Sigmoid colon (tissue), 7 donors: ENCODE measurements at regions of chr3 and their contacts with region 1.

Region 1: DNA sequence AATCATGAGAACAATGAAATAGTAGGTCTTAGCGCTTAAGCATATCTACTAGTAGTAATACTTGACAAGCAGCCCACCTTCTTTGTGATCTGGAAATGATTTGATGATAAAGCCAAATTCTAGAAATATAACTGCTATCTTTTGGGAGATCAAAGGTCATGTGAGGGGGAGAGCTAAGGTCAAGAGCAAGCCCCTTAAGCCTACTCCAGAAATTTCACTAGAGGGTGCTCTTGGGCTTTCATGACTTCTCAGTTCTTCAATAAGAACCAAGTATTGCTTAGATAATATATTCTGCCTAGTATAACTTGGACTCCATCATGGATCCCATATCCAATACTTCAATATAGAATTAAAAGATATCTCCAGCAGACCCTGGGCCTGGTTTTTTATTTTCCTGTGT is 319.6 kb downstream of the ZBTB20 start:
- DNase-seq: no peak
- H3K4me3 ChIP-seq: no peak overlapping the region
- H3K27ac ChIP-seq: no peak overlapping the region
- H3K4me1 ChIP-seq: peaks cover 0 to 4% (median 0%) of the 10 kb centered on the region in 4 donors
- H3K27me3 ChIP-seq: no peaks in the 10 kb centered on the region
- CTCF ChIP-seq: peak in 3 of 4 experiments; percentile 19 to 56 (median 32)
- EP300 ChIP-seq: no peak
- POLR2A ChIP-seq: no peak

Region 2: GRCh38 chr3:114928989-114929640 is 101.6 kb after region 1 on chr3:
- intact Hi-C with region 1: no loop called
- DNase-seq: no peak
- H3K4me3 ChIP-seq: no peak overlapping the region
- H3K27ac ChIP-seq: no peak overlapping the region
- H3K4me1 ChIP-seq: no peaks in the 10 kb centered on the region
- H3K27me3 ChIP-seq: no peaks in the 10 kb centered on the region
- CTCF ChIP-seq: no peak
- EP300 ChIP-seq: no peak
- POLR2A ChIP-seq: no peak

Region 3: GRCh38 chr3:115169808-115170207 is 342.3 kb after region 1 on chr3:
- intact Hi-C with region 1: loop called (anchors 10 kb)
- DNase-seq: no peak
- H3K4me3 ChIP-seq: no peak overlapping the region
- H3K27ac ChIP-seq: no peak overlapping the region
- H3K4me1 ChIP-seq: no peaks in the 10 kb centered on the region
- H3K27me3 ChIP-seq: no peaks in the 10 kb centered on the region
- CTCF ChIP-seq: peak in 2 of 4 experiments; percentile 28
- EP300 ChIP-seq: no peak
- POLR2A ChIP-seq: no peak